Heart left ventricle (tissue), 16 donors: ENCODE measurements at regions of chr10 and their contacts with region 1.

Region 1: DNA sequence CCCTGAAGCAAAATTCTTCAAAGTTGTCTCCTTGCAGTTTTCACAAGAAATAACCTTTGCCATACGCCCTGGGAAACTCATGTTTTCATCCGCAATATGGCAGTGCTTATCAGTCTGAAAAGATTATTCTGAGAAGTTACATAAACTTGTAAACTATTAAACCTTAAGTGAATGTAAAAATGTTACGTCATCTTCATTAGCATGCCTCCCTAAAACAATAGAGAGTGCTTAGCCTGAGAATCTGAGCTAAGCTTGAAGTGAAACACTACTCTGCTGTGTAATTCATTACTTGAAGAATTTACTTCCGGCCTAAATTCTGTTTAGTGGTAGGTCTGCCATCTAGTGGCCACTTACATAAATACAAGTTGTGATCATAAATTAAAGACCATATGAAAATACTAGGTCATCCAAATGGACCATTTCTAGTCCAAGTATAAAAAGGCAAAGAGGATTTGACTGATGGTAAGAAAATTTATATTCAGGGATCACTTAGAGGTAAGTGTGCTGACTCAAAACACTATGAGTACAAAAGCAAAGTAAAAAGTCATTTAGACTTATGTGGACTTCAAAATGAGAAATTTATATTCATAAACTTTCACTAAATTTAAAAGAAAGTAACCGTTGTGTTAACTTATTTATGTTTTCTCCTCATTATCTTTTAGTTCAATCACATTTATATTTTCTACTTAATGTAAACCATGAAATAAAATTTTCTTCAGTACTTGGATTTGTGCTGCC is 745.1 kb upstream of the LRRTM3 start:
- DNase-seq: peak in 1 of 5 donors; percentile 8
- ATAC-seq: peak in 3 of 4 donors; percentile 50 to 61 (median 59)
- H3K4me3 ChIP-seq: no peak overlapping the region
- H3K27ac ChIP-seq: no peak overlapping the region
- H3K4me1 ChIP-seq: peaks cover 0 to 3% (median 0%) of the 10 kb centered on the region in 12 donors
- H3K27me3 ChIP-seq: no peaks in the 10 kb centered on the region
- CTCF ChIP-seq: peak; percentile 59 to 83 (median 73)
- POLR2A ChIP-seq: no peak

Region 2: GRCh38 chr10:64733980-64734379 is 1446.8 kb before region 1 on chr10:
- intact Hi-C with region 1: loop called in 1 of 10 experiments (anchors 10 kb)
- DNase-seq: no peak
- ATAC-seq: no peak
- H3K4me3 ChIP-seq: no peak overlapping the region
- H3K27ac ChIP-seq: no peak overlapping the region
- H3K4me1 ChIP-seq: no peaks in the 10 kb centered on the region
- H3K27me3 ChIP-seq: no peaks in the 10 kb centered on the region
- CTCF ChIP-seq: peak in 6 of 12 donors; percentile 17 to 50 (median 33)
- POLR2A ChIP-seq: no peak

Region 3: GRCh38 chr10:64977915-64978314 is 1202.8 kb before region 1 on chr10:
- intact Hi-C with region 1: loop called in 1 of 10 experiments (anchors 5 kb)
- DNase-seq: no peak
- ATAC-seq: no peak
- H3K4me3 ChIP-seq: no peak overlapping the region
- H3K27ac ChIP-seq: no peak overlapping the region
- H3K4me1 ChIP-seq: no peaks in the 10 kb centered on the region
- H3K27me3 ChIP-seq: no peaks in the 10 kb centered on the region
- CTCF ChIP-seq: peak in 5 of 12 donors; percentile 8 to 31 (median 24)
- POLR2A ChIP-seq: no peak

Region 4: GRCh38 chr10:65751218-65751617 is 429.5 kb before region 1 on chr10:
- intact Hi-C with region 1: loop called in 1 of 10 experiments (anchors 5 kb)
- DNase-seq: no peak
- ATAC-seq: no peak
- H3K4me3 ChIP-seq: no peak overlapping the region
- H3K27ac ChIP-seq: no peak overlapping the region
- H3K4me1 ChIP-seq: no peaks in the 10 kb centered on the region
- H3K27me3 ChIP-seq: no peaks in the 10 kb centered on the region
- CTCF ChIP-seq: no peak
- POLR2A ChIP-seq: no peak

Region 5: GRCh38 chr10:66307826-66308225 is 127.1 kb after region 1 on chr10:
- intact Hi-C with region 1: no loop called
- DNase-seq: no peak
- ATAC-seq: no peak
- H3K4me3 ChIP-seq: no peak overlapping the region
- H3K27ac ChIP-seq: no peak overlapping the region
- H3K4me1 ChIP-seq: no peaks in the 10 kb centered on the region
- H3K27me3 ChIP-seq: no peaks in the 10 kb centered on the region
- CTCF ChIP-seq: peak in 5 of 12 donors; percentile 7 to 21 (median 18)
- POLR2A ChIP-seq: no peak